GM12878 (cell line): ENCODE measurements at regions of chr13 and their contacts with region 1.

Region 1: DNA sequence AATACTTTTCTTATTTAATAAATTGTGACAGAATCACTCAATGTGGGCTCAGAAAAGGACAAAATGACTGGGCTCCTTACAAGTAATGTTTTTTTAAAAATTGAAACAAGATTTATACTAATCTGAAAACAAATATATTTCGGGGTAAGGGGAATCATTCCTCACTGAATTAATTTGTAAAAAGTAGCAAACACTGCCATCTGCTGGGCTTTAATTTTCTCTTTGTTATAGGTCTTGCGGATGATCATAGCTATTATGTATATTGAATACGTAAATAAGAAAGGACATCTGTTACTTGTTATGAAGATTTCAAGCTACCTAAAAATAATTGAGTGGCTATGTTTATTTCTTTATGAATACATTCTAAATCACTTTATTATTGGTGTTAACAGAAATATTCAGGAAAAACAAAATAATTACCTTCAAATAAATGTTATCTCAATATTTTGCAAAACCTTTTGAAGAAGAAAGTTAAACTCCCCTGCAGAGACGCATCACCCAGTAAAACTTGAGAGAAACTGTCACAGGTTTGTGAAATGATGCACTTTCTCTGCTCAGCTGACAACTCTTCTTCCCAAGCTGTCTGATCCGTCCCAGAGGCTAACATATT is 17.8 kb upstream of the ENOX1 start:
- DNase-seq: peak; percentile 13
- ATAC-seq: peak; percentile 83
- H3K4me3 ChIP-seq: no peak overlapping the region
- H3K27ac ChIP-seq: no peak overlapping the region
- H3K4me1 ChIP-seq: no peaks in the 10 kb centered on the region
- H3K27me3 ChIP-seq: no peaks in the 10 kb centered on the region
- CTCF ChIP-seq: peak; percentile 17 to 54 (median 28); a peak in 4 of 6 replicates
- EP300 ChIP-seq: no peak
- POLR2A ChIP-seq: no peak
- RAD21 ChIP-seq: peak; percentile 66

Region 2: GRCh38 chr13:42594970-42595571 is 1209.5 kb before region 1 on chr13:
- CTCF ChIA-PET with region 1: interaction called, 10 read pairs
- POLR2A ChIA-PET with region 1: no interaction called
- RAD21 ChIA-PET with region 1: interaction called, 3 read pairs
- SMC1A ChIA-PET with region 1: interaction called, 3 read pairs
- in situ Hi-C with region 1: loop called (anchors 10 kb)
- intact Hi-C with region 1: loop called (anchors 5 kb)
- DNase-seq: peak; percentile 46
- ATAC-seq: peak; percentile 91
- H3K4me3 ChIP-seq: no peak overlapping the region
- H3K27ac ChIP-seq: no peak overlapping the region
- H3K4me1 ChIP-seq: no peaks in the 10 kb centered on the region; the same call in 1 of the 2 replicates
- H3K27me3 ChIP-seq: no peaks in the 10 kb centered on the region
- CTCF ChIP-seq: peak; percentile 60 to 86 (median 76)
- EP300 ChIP-seq: no peak
- POLR2A ChIP-seq: no peak
- RAD21 ChIP-seq: peak; percentile 95

Region 3: GRCh38 chr13:43085545-43085944 is 719.0 kb before region 1 on chr13:
- CTCF ChIA-PET with region 1: interaction called, 6 read pairs
- POLR2A ChIA-PET with region 1: no interaction called
- RAD21 ChIA-PET with region 1: interaction called, 3 read pairs
- SMC1A ChIA-PET with region 1: interaction called, 12 read pairs
- in situ Hi-C with region 1: no loop called
- intact Hi-C with region 1: loop called (anchors 5 kb)
- DNase-seq: no peak
- ATAC-seq: no peak
- H3K4me3 ChIP-seq: no peak overlapping the region
- H3K27ac ChIP-seq: no peak overlapping the region
- H3K4me1 ChIP-seq: peaks cover 2% of the 10 kb centered on the region; the same call in 1 of the 2 replicates
- H3K27me3 ChIP-seq: no peaks in the 10 kb centered on the region
- CTCF ChIP-seq: peak; percentile 3 to 44 (median 30); a peak in 2 of 6 replicates
- EP300 ChIP-seq: no peak
- POLR2A ChIP-seq: no peak
- RAD21 ChIP-seq: peak; percentile 36; the same call in 1 of the 2 replicates

Region 4: DNA sequence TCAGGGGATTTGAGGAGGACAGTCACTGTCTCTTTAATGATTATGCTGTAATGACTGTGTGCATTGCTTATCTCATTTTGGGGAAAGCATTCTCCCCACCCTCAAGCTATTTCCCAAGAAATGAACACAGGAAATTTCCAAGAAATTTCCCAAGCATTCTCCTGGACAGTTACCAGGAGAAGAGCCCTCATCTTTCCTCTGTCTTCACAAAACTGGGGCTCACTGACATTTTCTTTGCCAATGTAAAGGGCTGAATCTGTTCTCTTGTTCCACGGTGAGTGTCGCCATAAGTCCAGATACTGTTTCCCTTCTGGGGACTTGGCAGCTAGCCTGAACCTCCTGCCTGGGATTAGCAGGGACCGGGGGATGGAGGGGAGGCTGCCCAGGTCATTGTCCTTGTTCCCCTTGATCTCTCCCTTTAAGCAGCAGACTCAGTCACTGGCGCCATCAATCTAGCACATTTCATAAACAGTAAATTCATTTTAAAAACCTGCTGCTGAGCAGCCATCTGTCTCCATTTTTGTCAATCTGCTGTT is 608.4 kb before region 1 on chr13:
- CTCF ChIA-PET with region 1: interaction called, 4 read pairs
- POLR2A ChIA-PET with region 1: no interaction called
- RAD21 ChIA-PET with region 1: no interaction called
- SMC1A ChIA-PET with region 1: interaction called, 13 read pairs
- in situ Hi-C with region 1: no loop called
- intact Hi-C with region 1: loop called (anchors 10 kb)
- DNase-seq: no peak
- ATAC-seq: no peak
- H3K4me3 ChIP-seq: no peak overlapping the region
- H3K27ac ChIP-seq: no peak overlapping the region
- H3K4me1 ChIP-seq: no peaks in the 10 kb centered on the region
- H3K27me3 ChIP-seq: no peaks in the 10 kb centered on the region
- CTCF ChIP-seq: no peak
- EP300 ChIP-seq: no peak
- POLR2A ChIP-seq: no peak
- RAD21 ChIP-seq: no peak

Region 5: GRCh38 chr13:43303033-43303729 is 501.4 kb before region 1 on chr13:
- CTCF ChIA-PET with region 1: interaction called, 10 read pairs
- POLR2A ChIA-PET with region 1: no interaction called
- RAD21 ChIA-PET with region 1: interaction called, 7 read pairs
- SMC1A ChIA-PET with region 1: interaction called, 3 read pairs
- in situ Hi-C with region 1: loop called (anchors 10 kb)
- intact Hi-C with region 1: loop called (anchors 2 kb)
- DNase-seq: no peak
- ATAC-seq: peak; percentile 60
- H3K4me3 ChIP-seq: no peak overlapping the region
- H3K27ac ChIP-seq: no peak overlapping the region
- H3K4me1 ChIP-seq: peaks cover 12% of the 10 kb centered on the region
- H3K27me3 ChIP-seq: peaks cover 0 to 3% of the 10 kb centered on the region in 2 experiments; a peak in 1 of 4 replicates
- CTCF ChIP-seq: peak; percentile 39 to 47 (median 46); a peak in 5 of 6 replicates
- EP300 ChIP-seq: no peak
- POLR2A ChIP-seq: no peak
- RAD21 ChIP-seq: peak; percentile 54

Region 6: GRCh38 chr13:43742911-43743310 is 61.7 kb before region 1 on chr13:
- CTCF ChIA-PET with region 1: no interaction called
- POLR2A ChIA-PET with region 1: no interaction called
- RAD21 ChIA-PET with region 1: no interaction called
- SMC1A ChIA-PET with region 1: no interaction called
- in situ Hi-C with region 1: no loop called
- intact Hi-C with region 1: no loop called
- DNase-seq: no peak
- ATAC-seq: no peak
- H3K4me3 ChIP-seq: no peak overlapping the region
- H3K27ac ChIP-seq: no peak overlapping the region
- H3K4me1 ChIP-seq: no peaks in the 10 kb centered on the region
- H3K27me3 ChIP-seq: no peaks in the 10 kb centered on the region
- CTCF ChIP-seq: no peak
- EP300 ChIP-seq: no peak
- POLR2A ChIP-seq: no peak
- RAD21 ChIP-seq: no peak

Region 7: GRCh38 chr13:43792076-43792881 is 12.3 kb before region 1 on chr13:
- CTCF ChIA-PET with region 1: interaction called, 24 read pairs
- POLR2A ChIA-PET with region 1: no interaction called
- RAD21 ChIA-PET with region 1: interaction called, 6 read pairs
- SMC1A ChIA-PET with region 1: interaction called, 8 read pairs
- in situ Hi-C with region 1: no loop called
- intact Hi-C with region 1: no loop called
- DNase-seq: no peak
- ATAC-seq: no peak
- H3K4me3 ChIP-seq: no peak overlapping the region
- H3K27ac ChIP-seq: no peak overlapping the region
- H3K4me1 ChIP-seq: no peaks in the 10 kb centered on the region
- H3K27me3 ChIP-seq: peaks cover 2% of the 10 kb centered on the region in 2 experiments; a peak in 3 of 4 replicates
- CTCF ChIP-seq: no peak
- EP300 ChIP-seq: no peak
- POLR2A ChIP-seq: no peak
- RAD21 ChIP-seq: no peak

Region 8: DNA sequence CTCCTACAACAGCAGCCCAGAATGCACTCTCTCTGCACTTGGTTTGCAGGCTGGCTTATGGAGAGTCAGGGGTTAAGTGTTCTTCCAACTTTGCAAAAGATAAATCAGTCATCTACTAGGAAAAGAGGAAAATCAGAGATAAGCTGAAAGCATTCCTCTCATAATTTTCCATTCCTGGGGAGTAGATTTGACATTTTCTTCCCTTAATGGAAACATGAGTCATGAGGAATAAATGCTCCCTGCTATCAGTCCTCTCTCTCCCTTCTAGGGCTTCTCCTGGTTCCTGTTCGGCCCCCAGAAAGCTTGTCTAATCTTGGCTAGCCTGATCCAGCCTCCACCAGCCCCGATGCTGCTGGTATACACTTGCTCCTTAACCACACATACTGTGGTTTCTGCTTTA is 10.6 kb after region 1 on chr13:
- CTCF ChIA-PET with region 1: interaction called, 15 read pairs
- POLR2A ChIA-PET with region 1: no interaction called
- RAD21 ChIA-PET with region 1: interaction called, 3 read pairs
- SMC1A ChIA-PET with region 1: no interaction called
- in situ Hi-C with region 1: no loop called
- intact Hi-C with region 1: no loop called
- DNase-seq: no peak
- ATAC-seq: no peak
- H3K4me3 ChIP-seq: no peak overlapping the region
- H3K27ac ChIP-seq: no peak overlapping the region
- H3K4me1 ChIP-seq: no peaks in the 10 kb centered on the region
- H3K27me3 ChIP-seq: no peaks in the 10 kb centered on the region; a peak in 1 of 4 replicates
- CTCF ChIP-seq: no peak
- EP300 ChIP-seq: no peak
- POLR2A ChIP-seq: no peak
- RAD21 ChIP-seq: no peak